ENCODE measurements at regions of chr4 and their contacts with region 1.

Region 1: DNA sequence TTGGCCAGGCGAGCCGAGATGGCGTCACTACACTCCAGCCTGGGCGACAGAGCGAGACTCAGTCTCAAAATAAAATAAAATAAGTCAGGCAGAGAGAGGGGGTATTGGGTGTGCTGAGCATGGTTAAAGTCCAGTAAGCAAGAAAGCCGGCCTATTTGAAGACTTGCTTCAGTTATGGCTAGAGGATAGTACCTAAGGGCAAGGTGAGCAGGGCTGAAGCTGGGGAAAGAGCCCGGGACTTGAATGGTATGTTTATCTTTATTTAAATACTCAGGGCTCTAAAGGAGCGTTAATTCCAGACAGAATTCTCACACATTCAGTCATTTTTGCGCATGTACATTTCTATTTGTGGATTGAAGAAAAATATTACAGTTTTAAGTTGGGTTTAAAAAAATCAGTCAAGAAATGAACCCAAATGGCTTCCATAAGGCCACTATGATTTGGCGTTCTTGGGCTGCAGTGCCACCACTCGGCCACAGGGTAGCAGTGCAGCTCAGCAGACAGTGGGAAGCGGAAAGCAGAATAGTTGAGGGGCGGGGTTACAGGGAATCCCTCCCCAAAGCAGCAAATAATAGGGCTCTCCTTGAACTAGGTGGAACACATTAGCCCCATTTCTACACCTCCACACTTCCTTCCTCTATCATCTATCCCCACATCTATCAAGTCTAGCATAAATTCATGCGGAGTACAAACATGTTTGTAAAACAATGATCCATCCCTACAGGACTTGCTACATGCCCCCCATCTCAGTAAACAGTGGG is 37.2 kb upstream of the SH3D19 start:
- DNase-seq: peak; percentile 68
- H3K4me3 ChIP-seq: no peak overlapping the region
- H3K27ac ChIP-seq: no peak overlapping the region
- H3K4me1 ChIP-seq: no peaks in the 10 kb centered on the region
- H3K27me3 ChIP-seq: no peaks in the 10 kb centered on the region
- CTCF ChIP-seq: peak; percentile 66 to 94 (median 90)
- POLR2A ChIP-seq: no peak

Region 2: DNA sequence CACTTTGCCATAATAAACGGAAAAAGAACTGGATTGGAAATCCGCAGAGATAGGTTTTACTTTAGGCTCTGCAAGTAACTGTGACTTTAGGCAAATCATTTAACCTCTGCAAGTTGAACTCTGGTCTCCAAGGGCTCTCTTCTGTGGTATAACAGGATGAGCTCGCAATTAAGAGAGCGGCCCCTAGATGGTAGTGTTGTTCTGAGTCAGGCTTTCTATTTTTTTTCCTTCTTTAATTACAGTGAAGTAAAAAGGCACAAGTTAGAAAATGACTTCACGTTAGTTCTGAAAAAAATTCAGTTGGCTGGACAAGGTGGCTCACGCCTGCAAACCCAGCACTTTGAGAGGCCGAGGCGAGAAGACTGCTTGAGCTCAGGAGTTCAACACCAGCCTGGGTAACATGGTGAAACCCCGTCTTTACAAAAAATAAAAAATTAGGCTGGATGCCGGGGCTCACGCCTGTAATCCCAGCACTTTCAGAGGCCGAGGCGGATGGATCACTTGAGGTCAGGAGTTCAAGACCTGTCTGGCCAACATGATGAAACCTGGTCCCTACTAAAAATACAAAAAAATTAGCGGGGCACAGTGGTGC is 245.1 kb before region 1 on chr4:
- intact Hi-C with region 1: loop called (anchors 5 kb)
- DNase-seq: peak; percentile 40
- H3K4me3 ChIP-seq: no peak overlapping the region
- H3K27ac ChIP-seq: no peak overlapping the region
- H3K4me1 ChIP-seq: no peaks in the 10 kb centered on the region
- H3K27me3 ChIP-seq: no peaks in the 10 kb centered on the region
- CTCF ChIP-seq: peak in 3 of 4 experiments; percentile 58 to 72 (median 68)
- POLR2A ChIP-seq: no peak

Region 3: GRCh38 chr4:151242305-151242704 is 120.3 kb before region 1 on chr4:
- intact Hi-C with region 1: loop called (anchors 5 kb)
- DNase-seq: no peak
- H3K4me3 ChIP-seq: no peak overlapping the region
- H3K27ac ChIP-seq: no peak overlapping the region
- H3K4me1 ChIP-seq: no peaks in the 10 kb centered on the region
- H3K27me3 ChIP-seq: no peaks in the 10 kb centered on the region
- CTCF ChIP-seq: no peak
- POLR2A ChIP-seq: no peak

Region 4: GRCh38 chr4:151315212-151315886 is 47.2 kb before region 1 on chr4:
- intact Hi-C with region 1: no loop called
- DNase-seq: no peak
- H3K4me3 ChIP-seq: no peak overlapping the region
- H3K27ac ChIP-seq: peak overlapping the region; percentile 29 to 38
- H3K4me1 ChIP-seq: no peaks in the 10 kb centered on the region
- H3K27me3 ChIP-seq: no peaks in the 10 kb centered on the region
- CTCF ChIP-seq: no peak
- POLR2A ChIP-seq: no peak

Region 5: GRCh38 chr4:151434183-151434860 is 71.7 kb after region 1 on chr4:
- intact Hi-C with region 1: no loop called
- DNase-seq: no peak
- H3K4me3 ChIP-seq: no peak overlapping the region
- H3K27ac ChIP-seq: no peak overlapping the region
- H3K4me1 ChIP-seq: no peaks in the 10 kb centered on the region
- H3K27me3 ChIP-seq: no peaks in the 10 kb centered on the region
- CTCF ChIP-seq: no peak
- POLR2A ChIP-seq: no peak

Region 6: GRCh38 chr4:151489462-151490203 is 127.0 kb after region 1 on chr4:
- intact Hi-C with region 1: no loop called
- DNase-seq: no peak
- H3K4me3 ChIP-seq: no peak overlapping the region
- H3K27ac ChIP-seq: no peak overlapping the region
- H3K4me1 ChIP-seq: no peaks in the 10 kb centered on the region
- H3K27me3 ChIP-seq: no peaks in the 10 kb centered on the region
- CTCF ChIP-seq: no peak
- POLR2A ChIP-seq: no peak

Measured in prostate gland (tissue), 2 donors.